ENCODE measurements at regions of chr9 and their contacts with region 1.

Region 1: DNA sequence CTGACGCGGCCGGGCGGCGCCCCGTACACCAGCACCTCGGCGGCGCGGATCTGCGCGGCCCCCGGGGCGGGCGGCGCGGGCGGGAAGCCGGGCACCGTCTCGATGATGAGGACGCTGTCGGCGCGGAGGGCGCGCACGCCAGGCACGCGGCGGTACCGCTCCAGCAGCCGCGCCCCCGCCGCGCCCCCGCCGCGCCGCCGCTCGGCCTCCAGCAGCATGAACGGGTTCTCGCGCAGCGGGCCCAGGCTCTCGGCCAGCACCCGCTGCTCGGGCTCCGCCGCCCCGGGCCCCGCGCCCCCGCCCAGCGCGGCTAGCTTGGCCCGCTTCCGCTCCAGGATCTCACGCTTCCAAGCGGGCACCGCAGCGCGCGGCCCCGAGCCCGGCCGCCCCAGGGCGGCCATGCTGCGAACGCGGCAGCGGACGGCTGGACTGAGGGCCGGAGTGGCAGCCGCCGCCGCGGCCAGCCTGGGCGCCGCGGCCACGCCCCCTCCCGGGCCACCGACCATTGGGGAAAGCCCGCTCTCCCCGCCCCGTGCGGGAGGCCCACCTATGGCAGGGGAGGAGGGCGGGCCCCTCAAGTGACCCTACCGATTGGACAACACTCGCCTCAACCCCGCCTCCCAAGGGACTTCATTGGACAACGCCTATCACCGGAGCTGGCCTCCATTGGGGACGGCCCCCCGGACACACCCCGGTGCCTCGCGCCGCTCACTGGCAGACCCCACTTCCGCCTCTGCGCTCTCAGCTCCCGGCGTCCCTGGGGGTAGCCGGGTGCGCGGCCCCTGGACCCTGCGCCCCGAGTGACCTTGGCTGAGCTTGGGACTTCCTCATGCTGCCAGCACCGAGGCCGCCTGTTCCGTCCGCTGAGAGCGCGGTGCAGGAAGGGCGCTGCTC is at the start of gene TPRN:
- DNase-seq: peak; percentile 99
- ATAC-seq: peak; percentile 99
- H3K4me3 Mint-ChIP-seq: peak within 1 kb of the TSS; percentile 79
- H3K27ac Mint-ChIP-seq: peak within 1 kb of the TSS; percentile 76
- H3K4me1 Mint-ChIP-seq: peaks cover 29% of the 10 kb centered on the region
- H3K27me3 Mint-ChIP-seq: no peaks in the 10 kb centered on the region
- total RNA-seq, gene TPRN: 5.6 to 5.8 TPM

Region 2: GRCh38 chr9:136740971-136741882 is 459.3 kb before region 1 on chr9:
- CTCF ChIA-PET with region 1: no interaction called
- POLR2A ChIA-PET with region 1: no interaction called
- intact Hi-C with region 1: no loop called
- DNase-seq: no peak
- ATAC-seq: no peak
- H3K4me3 Mint-ChIP-seq: peak overlapping the region; percentile 28
- H3K27ac Mint-ChIP-seq: peak overlapping the region; percentile 60
- H3K4me1 Mint-ChIP-seq: peaks cover 7% of the 10 kb centered on the region
- H3K27me3 Mint-ChIP-seq: peaks cover 5% of the 10 kb centered on the region

Region 3: DNA sequence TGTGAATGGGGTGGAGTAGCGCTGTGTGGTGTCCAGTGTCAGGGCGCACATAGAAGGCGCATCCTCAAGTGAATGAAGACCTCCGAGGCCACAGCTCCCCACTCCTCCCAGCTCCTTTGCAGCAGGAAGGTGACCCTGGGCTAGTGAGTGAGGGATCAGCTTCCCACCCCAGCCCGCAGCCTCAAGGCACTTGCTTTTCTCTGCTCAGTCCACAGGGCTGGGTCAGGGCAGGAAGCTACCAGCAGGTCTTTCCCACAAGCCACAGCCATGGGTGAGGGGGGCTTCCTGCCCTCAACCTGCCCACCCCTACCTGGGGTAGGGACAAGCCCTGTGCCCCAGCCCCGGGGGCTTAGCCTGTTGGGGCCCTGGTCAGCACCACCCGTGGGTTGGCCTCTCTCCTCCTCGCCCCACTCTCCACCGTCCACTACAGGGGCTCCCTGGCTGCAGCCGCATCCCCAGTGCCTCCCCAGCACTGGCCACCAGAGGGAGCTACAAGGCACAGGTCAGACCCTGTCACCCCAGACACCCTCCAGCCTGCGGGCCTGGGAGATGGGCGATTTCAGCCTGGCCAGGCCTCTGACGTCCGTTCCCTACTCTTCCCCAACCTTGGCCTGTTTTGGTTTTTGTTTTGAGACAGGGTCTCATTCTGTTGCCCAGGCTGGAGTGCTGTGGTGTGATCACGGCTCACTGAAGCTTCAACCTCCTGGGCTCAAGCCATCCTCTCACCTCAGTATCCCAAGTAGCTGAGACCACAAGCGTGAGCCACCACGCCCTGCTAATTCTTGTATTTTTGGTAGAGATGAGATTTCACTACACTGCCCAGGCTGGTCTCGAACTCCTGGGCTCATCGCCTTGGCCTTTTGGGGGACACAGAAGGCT is 171.3 kb before region 1 on chr9:
- CTCF ChIA-PET with region 1: no interaction called
- POLR2A ChIA-PET with region 1: no interaction called
- intact Hi-C with region 1: loop called in 1 of 2 experiments (anchors 1 kb)
- DNase-seq: peak; percentile 88
- ATAC-seq: peak; percentile 52
- H3K4me3 Mint-ChIP-seq: peak overlapping the region; percentile 60
- H3K27ac Mint-ChIP-seq: peak overlapping the region; percentile 42
- H3K4me1 Mint-ChIP-seq: peaks cover 46% of the 10 kb centered on the region
- H3K27me3 Mint-ChIP-seq: no peaks in the 10 kb centered on the region

Region 4: GRCh38 chr9:137114610-137115391 is 85.8 kb before region 1 on chr9 and contains the start of gene DPP7:
- CTCF ChIA-PET with region 1: no interaction called
- POLR2A ChIA-PET with region 1: interaction called, 5 read pairs
- intact Hi-C with region 1: loop called in 1 of 2 experiments (anchors 1 kb)
- DNase-seq: peak; percentile 89
- ATAC-seq: peak; percentile 90
- H3K4me3 Mint-ChIP-seq: peak within 1 kb of the TSS; percentile 72
- H3K27ac Mint-ChIP-seq: peak within 1 kb of the TSS; percentile 51
- H3K4me1 Mint-ChIP-seq: peaks cover 13% of the 10 kb centered on the region
- H3K27me3 Mint-ChIP-seq: no peaks in the 10 kb centered on the region
- total RNA-seq, gene DPP7: 188 to 204 TPM

Region 5: DNA sequence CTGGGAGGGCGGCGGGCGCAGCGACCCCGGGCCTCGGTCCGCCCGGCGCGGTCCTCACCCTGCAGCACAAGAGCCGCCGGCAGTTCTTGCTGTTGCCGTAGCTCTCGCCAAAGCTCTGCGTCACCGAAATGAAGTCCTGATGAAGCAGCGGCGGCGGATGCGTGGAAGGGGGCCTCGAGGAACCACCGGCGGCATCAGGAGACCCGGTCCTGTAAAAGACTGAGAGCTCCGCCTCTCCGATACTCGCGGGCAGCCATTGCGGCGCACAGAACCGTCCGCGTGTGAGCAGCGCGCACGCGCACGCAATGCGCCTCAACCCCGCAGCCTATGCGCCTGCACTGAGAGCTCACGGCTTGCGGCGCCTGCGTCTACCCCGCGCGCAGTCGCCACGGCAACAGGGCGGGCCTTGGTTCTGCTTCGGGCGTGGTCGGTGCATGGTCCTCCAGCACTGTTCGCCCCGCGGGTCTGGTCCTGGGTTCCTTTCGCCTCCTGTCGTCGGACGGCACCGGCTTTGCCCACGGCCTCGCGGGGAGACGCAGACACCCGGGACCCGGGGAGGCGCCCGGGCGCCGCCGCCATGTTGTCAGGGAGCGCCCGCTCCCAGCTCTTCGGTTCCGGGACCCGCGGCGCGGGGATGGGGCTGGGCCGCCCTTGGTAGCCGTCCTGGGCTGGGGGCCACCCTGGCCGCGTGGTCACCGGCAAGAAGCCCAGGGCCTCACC is 70.9 kb before region 1 on chr9:
- CTCF ChIA-PET with region 1: interaction called, 3 read pairs
- POLR2A ChIA-PET with region 1: interaction called, 6 read pairs
- intact Hi-C with region 1: loop called in 1 of 2 experiments (anchors 1 kb)
- DNase-seq: peak; percentile 95
- ATAC-seq: peak; percentile 96
- H3K4me3 Mint-ChIP-seq: peak overlapping the region; percentile 89
- H3K27ac Mint-ChIP-seq: peak overlapping the region; percentile 70
- H3K4me1 Mint-ChIP-seq: peaks cover 21% of the 10 kb centered on the region
- H3K27me3 Mint-ChIP-seq: peaks cover 5% of the 10 kb centered on the region

Region 6: GRCh38 chr9:137254624-137255447 is 54.3 kb after region 1 on chr9 and contains the start of gene NELFB:
- CTCF ChIA-PET with region 1: interaction called, 5 read pairs
- POLR2A ChIA-PET with region 1: interaction called, 3 read pairs
- intact Hi-C with region 1: loop called in 1 of 2 experiments (anchors 1 kb)
- DNase-seq: peak; percentile 97
- ATAC-seq: peak; percentile 94
- H3K4me3 Mint-ChIP-seq: peak within 1 kb of the TSS; percentile 87
- H3K27ac Mint-ChIP-seq: peak within 1 kb of the TSS; percentile 81
- H3K4me1 Mint-ChIP-seq: peaks cover 18% of the 10 kb centered on the region
- H3K27me3 Mint-ChIP-seq: no peaks in the 10 kb centered on the region
- total RNA-seq, gene NELFB: 41.4 to 54.1 TPM

Measured in activated CD4-positive, alpha-beta T cell treated with anti-CD3 and anti-CD28 coated beads for 36 hours (primary cell).